Sciatic nerve (tissue), 2 donors: ENCODE measurements at regions of chr11 and their contacts with region 1.

Region 1: DNA sequence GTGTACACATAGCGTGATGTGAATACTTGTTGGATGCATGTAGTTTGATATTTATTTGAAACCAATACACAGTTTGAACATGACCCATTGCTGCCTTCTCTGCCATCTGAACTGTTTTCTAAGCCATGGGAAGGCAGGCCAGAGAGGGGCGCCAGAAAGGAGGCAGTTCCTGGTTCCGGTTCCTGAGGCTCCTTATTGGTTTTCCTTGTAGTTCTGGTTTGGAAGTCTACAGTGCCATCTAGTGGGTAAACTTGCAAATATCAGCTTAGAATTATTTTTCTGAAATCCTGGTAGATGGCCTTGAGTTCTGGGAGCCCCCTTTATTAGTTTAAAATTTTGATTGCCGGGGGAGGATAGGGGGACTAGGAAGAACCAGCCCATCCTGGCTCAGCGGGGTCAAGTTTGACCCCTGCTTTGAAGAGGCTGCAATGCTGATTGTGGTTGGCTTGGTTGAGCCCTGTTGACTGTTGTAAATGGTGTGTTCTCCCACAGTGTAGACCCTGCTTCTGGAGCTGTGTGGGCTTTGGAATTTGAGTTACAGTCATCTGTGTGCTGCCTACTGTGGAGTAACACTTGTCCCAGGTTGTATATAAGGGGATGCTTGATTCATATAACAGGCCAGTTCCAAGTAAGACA is 48.4 kb downstream of the GRAMD1B start:
- DNase-seq: no peak
- ATAC-seq: peak; percentile 84

Region 2: GRCh38 chr11:123301696-123302400 is 176.6 kb before region 1 on chr11:
- intact Hi-C with region 1: loop called (anchors 5 kb)
- DNase-seq: peak; percentile 75
- ATAC-seq: peak; percentile 84